Activated CD4-positive, alpha-beta T cell treated with anti-CD3 and anti-CD28 coated beads for 36 hours (primary cell): ENCODE measurements at regions of chr7 and their contacts with region 1.

Region 1: GRCh38 chr7:90455163-90456030 is 14.0 kb upstream of the PTTG1IP2 start:
- DNase-seq: no peak
- ATAC-seq: peak; percentile 64
- H3K4me3 Mint-ChIP-seq: no peak overlapping the region
- H3K27ac Mint-ChIP-seq: no peak overlapping the region
- H3K4me1 Mint-ChIP-seq: peaks cover 6% of the 10 kb centered on the region
- H3K27me3 Mint-ChIP-seq: peaks cover 16% of the 10 kb centered on the region

Region 2: DNA sequence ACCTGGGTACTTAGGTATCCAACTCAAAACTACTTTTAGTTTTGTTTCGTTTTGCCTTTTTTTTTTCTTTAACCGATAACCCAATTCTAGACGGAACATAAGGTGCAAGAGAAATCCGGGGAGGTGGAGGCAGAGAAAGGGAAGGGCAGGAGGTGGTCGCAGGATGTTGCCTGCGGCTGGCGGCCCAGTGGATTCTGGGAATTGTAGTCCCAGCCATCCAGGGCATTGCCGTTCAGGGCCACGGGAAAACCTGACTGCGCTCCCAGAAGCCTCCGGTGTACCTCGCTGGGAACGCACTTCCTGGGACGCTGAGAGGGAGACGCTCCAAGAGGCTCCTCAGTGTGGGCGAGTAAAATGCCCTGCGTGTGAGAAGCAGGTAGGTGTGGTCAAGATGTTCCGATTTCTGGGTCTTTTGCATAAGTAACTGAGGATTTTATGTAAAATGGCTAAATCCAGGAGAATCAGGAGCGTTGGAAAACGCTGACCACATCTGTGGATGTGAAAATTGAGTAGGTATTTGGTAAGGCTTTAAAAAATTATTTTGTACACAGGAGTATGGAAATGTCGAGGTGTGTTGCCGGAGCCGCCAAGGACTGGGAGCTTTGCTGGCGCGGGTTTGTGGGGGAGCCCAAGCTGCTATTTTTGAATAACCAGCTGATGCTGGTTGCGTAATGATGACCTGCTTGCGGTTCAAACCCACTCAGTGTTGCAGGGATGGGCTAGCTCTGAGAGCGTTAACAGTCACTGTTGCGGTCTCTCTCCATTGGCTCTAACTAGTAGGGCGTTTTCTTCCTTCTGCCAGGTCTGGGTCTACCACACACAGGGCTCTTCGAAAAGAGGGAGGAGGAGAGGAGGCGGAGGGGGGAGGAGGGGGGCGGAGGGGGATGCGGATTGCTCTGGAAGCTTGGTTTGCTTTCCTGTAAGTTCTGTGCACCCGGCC is 52.0 kb before region 1 on chr7 and contains the start of gene CLDN12:
- CTCF ChIA-PET with region 1: no interaction called
- POLR2A ChIA-PET with region 1: no interaction called
- intact Hi-C with region 1: no loop called
- DNase-seq: peak; percentile 88
- ATAC-seq: peak; percentile 98
- H3K4me3 Mint-ChIP-seq: peak within 1 kb of the TSS; percentile 96
- H3K27ac Mint-ChIP-seq: peak within 1 kb of the TSS; percentile 97
- H3K4me1 Mint-ChIP-seq: peaks cover 11% of the 10 kb centered on the region
- H3K27me3 Mint-ChIP-seq: no peaks in the 10 kb centered on the region
- total RNA-seq, gene CLDN12: 5.4 to 5.8 TPM

Region 3: GRCh38 chr7:90465816-90466215 is 10.4 kb after region 1 on chr7:
- CTCF ChIA-PET with region 1: interaction called, 12 read pairs
- POLR2A ChIA-PET with region 1: no interaction called
- intact Hi-C with region 1: no loop called
- DNase-seq: no peak
- ATAC-seq: no peak
- H3K4me3 Mint-ChIP-seq: no peak overlapping the region
- H3K27ac Mint-ChIP-seq: no peak overlapping the region
- H3K4me1 Mint-ChIP-seq: peaks cover 10% of the 10 kb centered on the region
- H3K27me3 Mint-ChIP-seq: peaks cover 2% of the 10 kb centered on the region

Region 4: GRCh38 chr7:90520484-90520883 is 65.1 kb after region 1 on chr7:
- CTCF ChIA-PET with region 1: interaction called, 3 read pairs
- POLR2A ChIA-PET with region 1: no interaction called
- intact Hi-C with region 1: loop called in 1 of 2 experiments (anchors 2 kb)
- DNase-seq: no peak
- ATAC-seq: no peak
- H3K4me3 Mint-ChIP-seq: no peak overlapping the region
- H3K27ac Mint-ChIP-seq: no peak overlapping the region
- H3K4me1 Mint-ChIP-seq: no peaks in the 10 kb centered on the region
- H3K27me3 Mint-ChIP-seq: peaks cover 2% of the 10 kb centered on the region

Region 5: GRCh38 chr7:90629297-90629918 is 174.0 kb after region 1 on chr7:
- CTCF ChIA-PET with region 1: interaction called, 29 read pairs
- POLR2A ChIA-PET with region 1: no interaction called
- intact Hi-C with region 1: loop called (anchors 1 to 2 kb)
- DNase-seq: no peak
- ATAC-seq: peak; percentile 58
- H3K4me3 Mint-ChIP-seq: no peak overlapping the region
- H3K27ac Mint-ChIP-seq: no peak overlapping the region
- H3K4me1 Mint-ChIP-seq: no peaks in the 10 kb centered on the region
- H3K27me3 Mint-ChIP-seq: no peaks in the 10 kb centered on the region

Region 6: DNA sequence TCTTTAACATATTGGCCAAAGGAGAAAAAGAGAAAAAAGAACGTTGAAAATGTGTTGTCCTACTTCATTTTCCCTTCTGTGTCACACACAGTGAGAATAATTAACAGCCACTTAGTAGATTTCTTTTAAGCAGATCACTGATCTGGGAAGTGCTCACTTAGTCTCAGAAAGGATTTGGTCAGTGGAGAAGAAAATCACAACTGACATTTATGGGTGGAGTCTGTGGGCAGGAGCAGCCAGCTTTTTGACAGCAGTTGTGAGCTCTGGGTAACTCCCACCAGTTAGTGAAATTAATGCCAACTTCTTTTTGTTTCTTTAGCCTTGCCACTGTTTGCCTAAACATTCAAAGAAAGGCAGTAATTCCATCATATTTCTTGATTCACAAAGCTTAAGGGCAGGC is 190.4 kb after region 1 on chr7:
- CTCF ChIA-PET with region 1: no interaction called
- POLR2A ChIA-PET with region 1: no interaction called
- intact Hi-C with region 1: no loop called
- DNase-seq: no peak
- ATAC-seq: no peak
- H3K4me3 Mint-ChIP-seq: no peak overlapping the region
- H3K27ac Mint-ChIP-seq: no peak overlapping the region
- H3K4me1 Mint-ChIP-seq: no peaks in the 10 kb centered on the region
- H3K27me3 Mint-ChIP-seq: no peaks in the 10 kb centered on the region

Region 7: GRCh38 chr7:91034459-91035368 is 579.3 kb after region 1 on chr7:
- CTCF ChIA-PET with region 1: interaction called, 10 read pairs
- POLR2A ChIA-PET with region 1: no interaction called
- intact Hi-C with region 1: loop called (anchors 1 to 5 kb)
- DNase-seq: peak; percentile 64
- ATAC-seq: no peak
- H3K4me3 Mint-ChIP-seq: no peak overlapping the region
- H3K27ac Mint-ChIP-seq: no peak overlapping the region
- H3K4me1 Mint-ChIP-seq: no peaks in the 10 kb centered on the region
- H3K27me3 Mint-ChIP-seq: no peaks in the 10 kb centered on the region